ENCODE measurements at regions of chr18 and their contacts with region 1.

Region 1: GRCh38 chr18:62324917-62325805 is at the start of gene TNFRSF11A:
- DNase-seq: peak in 1 of 2 experiments; percentile 60
- H3K4me3 ChIP-seq: peak within 1 kb of the TSS; percentile 71
- H3K27ac ChIP-seq: no peak within 1 kb of the TSS
- H3K4me1 ChIP-seq: peaks cover 11% of the 10 kb centered on the region; the same call in 1 of the 2 replicates
- H3K27me3 ChIP-seq: no peaks in the 10 kb centered on the region
- CTCF ChIP-seq: peak; percentile 62; the same call in 1 of the 2 replicates
- total RNA-seq, gene TNFRSF11A: 6.3 and 6.7 TPM in 2 replicates

Region 2: DNA sequence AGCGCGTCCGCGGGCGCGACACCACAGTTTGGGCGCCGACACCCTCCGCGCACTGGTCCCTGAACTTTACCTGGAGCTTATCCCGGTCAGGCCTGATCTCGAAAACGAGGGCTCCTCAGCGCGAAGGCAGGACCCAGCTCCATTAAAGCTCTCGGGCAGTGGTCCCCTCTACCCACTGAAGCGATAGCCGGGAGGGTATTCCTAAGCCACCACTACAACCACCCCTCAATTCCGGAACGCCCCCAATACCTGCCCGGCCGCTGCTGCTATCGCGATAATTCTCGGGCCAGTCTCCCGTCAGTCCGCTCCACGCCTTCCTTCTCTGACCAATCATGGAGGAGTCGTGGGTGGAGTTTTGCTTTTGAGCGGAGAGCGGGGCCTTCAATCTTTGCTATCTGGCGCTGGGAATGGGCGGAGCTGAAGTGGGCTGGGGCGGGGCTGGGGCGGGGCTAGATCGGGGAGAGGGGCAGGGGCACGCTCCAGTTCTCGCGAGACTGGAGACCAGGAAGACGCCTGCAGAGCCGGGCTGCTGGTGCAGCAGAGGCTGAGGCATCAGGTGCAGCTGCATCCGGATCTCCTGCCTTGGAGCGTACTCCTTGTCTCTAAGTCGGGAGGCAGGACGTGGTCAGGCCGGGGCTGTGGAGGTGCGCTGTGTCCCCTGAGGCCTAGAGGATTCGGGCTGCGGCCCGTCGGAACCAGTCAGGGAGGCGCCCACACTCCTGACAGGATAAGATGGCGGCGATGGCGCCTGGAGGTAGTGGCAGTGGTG is 138.2 kb before region 1 on chr18 and contains the starts of genes PIGN and RELCH:
- CTCF ChIA-PET with region 1: no interaction called
- POLR2A ChIA-PET with region 1: interaction called, 3 read pairs
- intact Hi-C with region 1: loop called (anchors 5 kb)
- DNase-seq: peak; percentile 89 to 96
- H3K4me3 ChIP-seq: peak within 1 kb of the TSS; percentile 92
- H3K27ac ChIP-seq: peak within 1 kb of the TSS; percentile 76
- H3K4me1 ChIP-seq: peaks cover 42% of the 10 kb centered on the region
- H3K27me3 ChIP-seq: no peaks in the 10 kb centered on the region
- CTCF ChIP-seq: no peak
- total RNA-seq, gene PIGN: 14.6 and 20.3 TPM in 2 replicates
- total RNA-seq, gene RELCH: 19.6 and 20.1 TPM in 2 replicates

Region 3: GRCh38 chr18:62388855-62389760 is 63.9 kb after region 1 on chr18:
- CTCF ChIA-PET with region 1: no interaction called
- POLR2A ChIA-PET with region 1: no interaction called
- intact Hi-C with region 1: loop called (anchors 2 kb)
- DNase-seq: peak; percentile 47 to 96
- H3K4me3 ChIP-seq: peak overlapping the region; percentile 4; the same call in 1 of the 2 replicates
- H3K27ac ChIP-seq: peak overlapping the region; percentile 51
- H3K4me1 ChIP-seq: peaks cover 29% of the 10 kb centered on the region
- H3K27me3 ChIP-seq: no peaks in the 10 kb centered on the region
- CTCF ChIP-seq: no peak

Region 4: DNA sequence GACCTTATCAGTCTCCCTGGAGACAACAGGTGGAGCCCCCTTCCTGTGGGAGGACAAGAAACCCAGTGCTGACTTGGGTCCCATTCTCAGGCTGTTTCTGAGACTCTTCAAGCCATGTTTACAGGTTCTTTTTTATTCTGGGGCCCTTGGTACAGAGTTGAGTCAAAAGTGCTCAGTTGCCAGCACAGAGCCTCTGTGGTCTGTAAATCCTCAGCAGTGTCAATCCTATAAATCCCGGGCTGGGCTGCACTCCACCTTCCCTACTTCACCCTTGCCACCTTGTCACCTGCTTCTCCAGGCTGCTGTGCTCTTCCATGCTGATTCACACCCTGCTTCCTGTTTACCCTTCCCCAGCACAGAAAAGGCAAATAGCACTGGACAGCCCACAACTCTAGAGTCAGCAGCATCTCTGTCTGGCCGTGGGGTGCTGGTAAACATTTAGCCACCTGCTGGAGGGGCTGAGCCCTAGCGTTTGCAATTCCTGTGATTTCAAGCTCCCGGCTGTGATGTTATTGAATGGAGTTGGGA is 74.7 kb after region 1 on chr18:
- CTCF ChIA-PET with region 1: no interaction called
- POLR2A ChIA-PET with region 1: no interaction called
- intact Hi-C with region 1: loop called (anchors 5 kb)
- DNase-seq: peak; percentile 24 to 82
- H3K4me3 ChIP-seq: no peak overlapping the region
- H3K27ac ChIP-seq: peak overlapping the region; percentile 24; the same call in 1 of the 2 replicates
- H3K4me1 ChIP-seq: peaks cover 16% of the 10 kb centered on the region
- H3K27me3 ChIP-seq: no peaks in the 10 kb centered on the region
- CTCF ChIP-seq: peak; percentile 68

Region 5: DNA sequence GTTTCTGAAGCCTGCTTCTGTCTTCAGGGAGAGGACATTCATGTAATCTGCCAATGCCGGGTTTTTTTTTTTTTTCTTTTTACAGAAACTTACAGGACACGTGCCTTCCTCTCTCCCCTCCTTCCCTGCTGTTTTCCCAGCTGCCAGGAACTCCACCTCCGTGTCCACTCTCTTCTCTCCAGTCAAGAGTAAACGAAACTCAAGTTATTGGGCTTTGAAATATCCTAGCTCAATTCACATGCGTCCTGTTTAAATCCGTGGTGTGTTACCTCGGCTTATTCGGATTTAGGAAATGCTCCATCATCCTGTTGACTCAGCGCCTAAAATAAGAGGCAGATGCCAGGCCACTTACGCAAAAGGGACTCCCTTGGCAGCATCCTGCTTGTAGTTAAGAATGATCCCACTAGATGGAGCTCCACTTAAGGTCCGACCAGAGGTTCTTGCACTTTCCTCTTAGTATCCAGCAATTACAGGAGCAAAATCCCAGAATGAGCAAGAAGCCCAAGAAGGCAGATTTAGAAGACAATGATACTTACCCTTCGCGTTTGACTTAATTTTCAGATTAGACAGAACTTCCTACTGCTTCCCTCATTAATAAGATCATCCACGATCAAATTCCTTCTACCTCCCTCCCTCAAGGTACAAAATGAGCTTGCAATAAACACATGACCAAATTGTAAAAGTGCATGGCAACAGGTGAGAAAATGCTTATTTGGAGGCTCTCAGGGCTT is 100.5 kb after region 1 on chr18:
- CTCF ChIA-PET with region 1: interaction called, 4 read pairs
- POLR2A ChIA-PET with region 1: interaction called, 4 read pairs
- intact Hi-C with region 1: loop called (anchors 2 kb)
- DNase-seq: peak; percentile 70 to 90
- H3K4me3 ChIP-seq: peak overlapping the region; percentile 52; the same call in 1 of the 2 replicates
- H3K27ac ChIP-seq: peak overlapping the region; percentile 71
- H3K4me1 ChIP-seq: peaks cover 18% of the 10 kb centered on the region
- H3K27me3 ChIP-seq: no peaks in the 10 kb centered on the region
- CTCF ChIP-seq: peak; percentile 90

Region 6: GRCh38 chr18:62522504-62523254 is 197.5 kb after region 1 on chr18 and contains the start of gene ZCCHC2:
- CTCF ChIA-PET with region 1: no interaction called
- POLR2A ChIA-PET with region 1: no interaction called
- intact Hi-C with region 1: loop called (anchors 10 kb)
- DNase-seq: peak; percentile 88 to 96
- H3K4me3 ChIP-seq: peak within 1 kb of the TSS; percentile 95
- H3K27ac ChIP-seq: peak within 1 kb of the TSS; percentile 53
- H3K4me1 ChIP-seq: peaks cover 30% of the 10 kb centered on the region
- H3K27me3 ChIP-seq: no peaks in the 10 kb centered on the region
- CTCF ChIP-seq: no peak
- total RNA-seq, gene ZCCHC2: 12.0 and 18.1 TPM in 2 replicates

Region 7: DNA sequence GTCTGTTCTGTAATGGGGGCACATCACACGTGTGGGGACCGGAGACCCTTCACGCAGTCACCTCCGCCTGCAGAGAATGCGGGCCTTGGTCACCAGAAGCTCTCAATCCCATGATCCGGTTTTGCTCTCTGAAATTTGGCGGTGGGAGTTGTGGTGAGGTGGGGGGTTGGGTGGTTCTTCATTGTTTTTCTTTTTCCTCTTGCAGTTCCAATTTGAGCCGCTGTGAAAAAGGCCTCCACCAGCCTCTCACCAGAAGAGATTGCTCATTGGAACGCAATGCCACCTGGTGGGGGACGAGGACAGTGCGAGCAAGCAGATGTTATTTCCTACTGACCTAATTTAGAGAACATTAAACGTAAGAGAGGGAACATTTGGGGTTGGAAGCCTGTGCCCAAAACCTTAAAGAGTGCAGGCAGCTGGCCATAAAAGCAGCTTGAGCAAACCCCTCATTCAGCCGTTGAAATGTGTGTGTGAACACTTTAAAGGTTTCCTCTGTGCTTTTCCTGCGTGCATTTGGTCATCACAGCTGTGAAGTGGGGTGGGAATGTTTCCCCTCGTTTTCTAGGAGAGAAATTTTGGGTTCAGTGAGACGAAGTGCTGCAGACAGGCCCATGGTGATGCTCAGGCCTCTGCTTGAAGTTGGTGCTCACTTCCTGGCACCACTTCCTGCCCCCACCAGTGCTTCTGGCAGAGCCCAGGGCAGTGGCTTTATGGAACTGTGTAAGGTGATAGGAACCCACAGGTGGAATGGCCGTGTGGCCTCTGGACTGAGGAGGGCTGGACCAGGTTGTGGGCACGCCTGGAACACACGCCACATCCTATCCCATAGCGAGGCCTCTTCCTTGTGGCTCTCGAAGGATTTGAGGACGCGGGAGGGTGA is 259.3 kb after region 1 on chr18:
- CTCF ChIA-PET with region 1: no interaction called
- POLR2A ChIA-PET with region 1: no interaction called
- intact Hi-C with region 1: loop called (anchors 1 kb)
- DNase-seq: peak; percentile 68 to 75
- H3K4me3 ChIP-seq: no peak overlapping the region
- H3K27ac ChIP-seq: no peak overlapping the region
- H3K4me1 ChIP-seq: no peaks in the 10 kb centered on the region
- H3K27me3 ChIP-seq: no peaks in the 10 kb centered on the region
- CTCF ChIP-seq: peak; percentile 93